Gastrocnemius medialis (tissue), 4 donors: ENCODE measurements at regions of chr2 and their contacts with region 1.

Region 1: GRCh38 chr2:41928526-41928925 is 119.3 kb upstream of the PKDCC start:
- DNase-seq: no peak
- ATAC-seq: no peak
- H3K4me3 ChIP-seq: no peak overlapping the region
- H3K27ac ChIP-seq: peak overlapping the region; percentile 89 to 98 (median 98)
- H3K4me1 ChIP-seq: peaks cover 75 to 83% of the 10 kb centered on the region in 2 donors
- H3K27me3 ChIP-seq: no peaks in the 10 kb centered on the region
- CTCF ChIP-seq: no peak
- POLR2A ChIP-seq: no peak

Region 2: GRCh38 chr2:41853427-41854216 is 74.9 kb before region 1 on chr2:
- in situ Hi-C with region 1: loop called in 1 of 4 experiments (anchors 10 kb)
- intact Hi-C with region 1: loop called (anchors 1 kb)
- DNase-seq: no peak
- ATAC-seq: no peak
- H3K4me3 ChIP-seq: no peak overlapping the region
- H3K27ac ChIP-seq: peak overlapping the region; percentile 83 to 93 (median 90)
- H3K4me1 ChIP-seq: peaks cover 12 to 19% of the 10 kb centered on the region in 2 donors
- H3K27me3 ChIP-seq: no peaks in the 10 kb centered on the region
- CTCF ChIP-seq: peak; percentile 59 to 79 (median 68)
- POLR2A ChIP-seq: no peak

Region 3: DNA sequence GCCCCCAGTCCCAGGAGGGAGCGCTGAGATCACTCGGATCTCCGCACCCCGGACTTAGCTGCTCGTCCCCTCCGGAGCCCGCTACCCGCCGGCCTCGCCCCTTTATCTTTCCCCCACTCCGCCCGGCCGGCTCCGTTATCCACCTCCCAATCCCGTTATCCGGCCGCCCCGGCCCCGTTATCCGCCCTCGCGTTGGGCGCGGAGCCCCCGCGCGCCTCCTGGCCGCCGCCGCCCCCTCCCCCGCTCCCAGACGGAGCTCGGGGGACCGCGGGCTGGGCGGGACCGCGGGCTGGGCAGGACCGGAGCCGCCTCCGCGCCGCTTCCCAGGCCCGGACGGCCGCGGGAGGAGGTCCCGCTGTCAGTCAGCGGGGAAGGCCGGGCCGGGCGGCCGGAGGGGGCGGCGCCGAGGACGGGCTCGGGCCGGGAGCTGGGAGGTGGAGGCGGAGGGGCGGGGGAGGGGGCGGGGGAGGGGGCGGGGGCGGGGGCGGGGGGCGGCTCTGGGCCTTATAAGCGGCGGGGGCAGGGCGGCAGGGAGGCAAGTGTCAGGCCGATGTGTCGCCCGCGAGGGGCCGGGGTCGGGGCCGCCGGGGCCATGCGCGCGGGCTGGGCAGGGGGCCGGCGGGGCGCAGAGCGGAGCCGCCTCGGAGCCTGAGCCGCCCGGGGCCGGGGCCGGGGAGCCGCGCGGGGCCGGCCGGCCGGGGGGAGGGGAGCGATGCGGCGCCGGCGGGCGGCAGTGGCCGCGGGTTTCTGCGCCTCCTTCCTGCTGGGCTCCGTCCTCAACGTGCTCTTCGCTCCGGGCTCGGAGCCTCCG is 119.2 kb after region 1 on chr2 and contains the start of gene PKDCC:
- in situ Hi-C with region 1: loop called in 1 of 4 experiments (anchors 5 kb)
- intact Hi-C with region 1: loop called (anchors 1 kb)
- DNase-seq: peak; percentile 77 to 86
- ATAC-seq: peak; percentile 32 to 44
- H3K4me3 ChIP-seq: peak within 1 kb of the TSS; percentile 84 to 90 (median 85)
- H3K27ac ChIP-seq: peak within 1 kb of the TSS; percentile 94 to 99 (median 98)
- H3K4me1 ChIP-seq: peaks cover 19 to 33% of the 10 kb centered on the region in 2 donors
- H3K27me3 ChIP-seq: no peaks in the 10 kb centered on the region
- CTCF ChIP-seq: no peak
- POLR2A ChIP-seq: peak; percentile 87 to 89
- total RNA-seq, gene PKDCC: 152 to 246 (median 186) TPM

Region 4: GRCh38 chr2:42053791-42054701 is 125.5 kb after region 1 on chr2:
- in situ Hi-C with region 1: loop called in 1 of 4 experiments (anchors 5 kb)
- intact Hi-C with region 1: loop called (anchors 1 kb)
- DNase-seq: peak; percentile 81 to 94
- ATAC-seq: peak; percentile 74 to 80
- H3K4me3 ChIP-seq: peak overlapping the region; percentile 24 to 86 (median 52)
- H3K27ac ChIP-seq: peak overlapping the region; percentile 94 to 99 (median 98)
- H3K4me1 ChIP-seq: peaks cover 69 to 72% of the 10 kb centered on the region in 2 donors
- H3K27me3 ChIP-seq: no peaks in the 10 kb centered on the region
- CTCF ChIP-seq: no peak
- POLR2A ChIP-seq: peak; percentile 79 to 87